ENCODE measurements at regions of chr3 and their contacts with region 1.

Region 1: DNA sequence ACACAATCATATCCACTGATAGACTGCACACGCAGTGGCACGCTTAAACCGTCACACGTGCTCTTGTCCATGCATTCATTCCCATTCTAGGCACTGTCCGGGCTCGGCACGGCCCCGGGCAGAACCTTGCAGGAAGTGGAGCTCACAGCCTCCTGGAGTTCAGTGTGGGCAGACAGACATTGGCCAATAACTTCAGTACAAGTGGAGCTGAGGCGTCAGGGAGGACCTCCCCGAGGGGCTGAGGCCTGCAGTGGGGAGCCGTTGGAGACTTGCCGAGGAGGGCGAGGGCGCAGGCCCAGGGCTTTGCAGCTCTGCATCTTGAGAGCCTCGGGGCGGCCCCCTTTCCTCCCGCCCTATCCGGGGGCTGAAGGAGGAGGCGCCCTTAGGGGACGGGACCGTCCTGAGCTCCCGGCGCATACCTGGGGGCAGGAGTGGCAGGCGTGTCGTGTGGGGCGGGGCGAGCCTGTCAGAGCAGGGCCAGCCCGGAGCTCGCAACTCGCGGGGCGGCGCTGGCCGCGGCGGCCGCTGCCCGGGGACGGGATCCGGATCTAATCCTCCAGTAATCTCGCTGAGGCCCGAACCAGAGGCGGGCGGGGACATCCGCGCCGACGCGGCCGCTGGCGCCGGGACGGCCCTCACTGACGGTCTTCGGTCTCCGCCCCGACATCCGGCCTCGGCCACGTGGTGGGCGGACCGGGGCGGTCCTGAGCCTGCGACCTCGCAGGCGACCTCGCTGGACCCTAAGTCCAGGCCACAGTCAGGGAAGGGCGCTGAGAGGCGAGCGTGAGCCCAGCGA is at the start of gene ACY1:
- DNase-seq: peak; percentile 54 to 83 (median 60)
- H3K4me3 ChIP-seq: peak within 1 kb of the TSS; percentile 36 to 55
- H3K4me3 Mint-ChIP-seq: peak within 1 kb of the TSS; percentile 90 to 97 (median 94)
- H3K27ac ChIP-seq: peak within 1 kb of the TSS; percentile 77
- H3K27ac Mint-ChIP-seq: peak within 1 kb of the TSS; percentile 84 to 98 (median 94)
- H3K4me1 ChIP-seq: peaks cover 26% of the 10 kb centered on the region
- H3K4me1 Mint-ChIP-seq: peaks cover 7 to 29% (median 24%) of the 10 kb centered on the region in 4 donors
- H3K27me3 ChIP-seq: no peaks in the 10 kb centered on the region
- H3K27me3 Mint-ChIP-seq: no peaks in the 10 kb centered on the region
- total RNA-seq, gene ACY1: 7.7 to 8.4 TPM

Region 2: GRCh38 chr3:51845129-51845528 is 137.9 kb before region 1 on chr3:
- CTCF ChIA-PET with region 1: no interaction called
- POLR2A ChIA-PET with region 1: no interaction called
- intact Hi-C with region 1: no loop called
- DNase-seq: no peak
- H3K4me3 ChIP-seq: no peak overlapping the region
- H3K4me3 Mint-ChIP-seq: no peak overlapping the region
- H3K27ac ChIP-seq: no peak overlapping the region
- H3K27ac Mint-ChIP-seq: no peak overlapping the region
- H3K4me1 ChIP-seq: no peaks in the 10 kb centered on the region
- H3K4me1 Mint-ChIP-seq: no peaks in the 10 kb centered on the region
- H3K27me3 ChIP-seq: peaks cover 4% of the 10 kb centered on the region
- H3K27me3 Mint-ChIP-seq: peaks cover 23 to 25% of the 10 kb centered on the region in 2 donors

Region 3: GRCh38 chr3:51967384-51968169 is 15.4 kb before region 1 on chr3 and contains the start of gene PCBP4:
- CTCF ChIA-PET with region 1: interaction called, 47 read pairs
- POLR2A ChIA-PET with region 1: interaction called, 28 read pairs
- intact Hi-C with region 1: no loop called
- DNase-seq: peak in 3 of 5 donors; percentile 32 to 48 (median 43)
- H3K4me3 ChIP-seq: peak within 1 kb of the TSS; percentile 63 to 65
- H3K4me3 Mint-ChIP-seq: peak within 1 kb of the TSS; percentile 81 to 94 (median 83)
- H3K27ac ChIP-seq: peak within 1 kb of the TSS; percentile 57
- H3K27ac Mint-ChIP-seq: peak within 1 kb of the TSS; percentile 68 to 94 (median 85)
- H3K4me1 ChIP-seq: peaks cover 22% of the 10 kb centered on the region
- H3K4me1 Mint-ChIP-seq: peaks cover 15 to 40% (median 29%) of the 10 kb centered on the region in 4 donors
- H3K27me3 ChIP-seq: no peaks in the 10 kb centered on the region
- H3K27me3 Mint-ChIP-seq: no peaks in the 10 kb centered on the region
- total RNA-seq, gene PCBP4: 18.7 to 20.5 TPM

Region 4: GRCh38 chr3:52339612-52340011 is 356.6 kb after region 1 on chr3:
- CTCF ChIA-PET with region 1: no interaction called
- POLR2A ChIA-PET with region 1: no interaction called
- intact Hi-C with region 1: no loop called
- DNase-seq: peak; percentile 64 to 82 (median 79)
- H3K4me3 ChIP-seq: no peak overlapping the region
- H3K4me3 Mint-ChIP-seq: no peak overlapping the region
- H3K27ac ChIP-seq: no peak overlapping the region
- H3K27ac Mint-ChIP-seq: peak overlapping the region in 6 of 7 donors; percentile 12 to 88 (median 52)
- H3K4me1 ChIP-seq: no peaks in the 10 kb centered on the region
- H3K4me1 Mint-ChIP-seq: peaks cover 7 to 10% (median 8%) of the 10 kb centered on the region in 4 donors
- H3K27me3 ChIP-seq: no peaks in the 10 kb centered on the region
- H3K27me3 Mint-ChIP-seq: no peaks in the 10 kb centered on the region

Region 5: DNA sequence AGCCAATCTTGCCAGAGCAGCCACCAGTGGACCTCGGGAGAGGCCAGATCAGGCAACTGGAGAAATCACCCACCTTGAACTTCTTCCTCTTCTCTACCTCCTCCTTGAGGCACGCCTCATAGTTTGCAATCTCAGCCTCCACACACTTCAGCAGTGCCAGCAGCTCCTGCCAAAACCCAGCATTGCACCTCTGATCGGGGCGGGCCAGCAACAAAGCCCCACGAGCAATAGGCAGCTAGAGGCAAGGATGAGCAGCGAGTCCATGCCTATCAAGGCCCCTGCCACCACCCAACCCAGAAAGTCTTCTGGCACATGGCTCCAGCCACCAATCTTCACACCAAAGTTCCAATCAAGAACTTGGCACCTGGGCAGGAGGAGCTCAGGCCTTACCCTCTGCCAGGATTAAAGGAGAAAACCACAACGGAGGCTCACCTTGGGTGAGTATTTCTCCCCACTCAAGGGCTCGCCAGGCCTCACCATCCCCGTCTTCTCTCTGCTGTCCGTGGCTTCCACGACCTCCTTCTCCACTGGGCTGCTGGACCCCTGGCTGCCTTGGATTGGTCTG is 419.8 kb after region 1 on chr3:
- CTCF ChIA-PET with region 1: no interaction called
- POLR2A ChIA-PET with region 1: no interaction called
- intact Hi-C with region 1: no loop called
- DNase-seq: no peak
- H3K4me3 ChIP-seq: no peak overlapping the region
- H3K4me3 Mint-ChIP-seq: no peak overlapping the region
- H3K27ac ChIP-seq: no peak overlapping the region
- H3K27ac Mint-ChIP-seq: no peak overlapping the region
- H3K4me1 ChIP-seq: peaks cover 2% of the 10 kb centered on the region
- H3K4me1 Mint-ChIP-seq: peaks cover 0 to 7% (median 3%) of the 10 kb centered on the region in 4 donors
- H3K27me3 ChIP-seq: no peaks in the 10 kb centered on the region
- H3K27me3 Mint-ChIP-seq: no peaks in the 10 kb centered on the region